Gastrocnemius medialis (tissue), 4 donors: ENCODE measurements at regions of chr12 and their contacts with region 1.

Region 1: DNA sequence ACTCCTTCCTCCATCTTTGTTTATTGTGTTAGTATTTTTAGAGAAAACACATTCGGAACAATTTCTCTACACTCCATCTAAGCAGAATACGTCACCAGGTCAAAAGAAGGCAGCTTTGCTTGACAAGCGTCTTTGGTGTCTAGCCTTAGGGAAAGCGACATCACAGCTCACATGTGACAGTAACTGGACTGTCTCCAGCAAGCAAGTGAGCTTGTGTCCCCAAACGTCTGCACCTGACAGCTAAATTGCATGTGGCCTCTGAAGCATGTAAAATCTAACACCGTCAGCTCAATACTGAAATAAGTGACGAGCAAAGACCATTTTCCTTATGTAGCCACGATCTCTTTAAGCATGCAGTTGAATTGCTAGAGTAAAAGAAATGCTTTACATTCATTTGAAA is 509.8 kb downstream of the GLT1D1 start:
- DNase-seq: no peak
- ATAC-seq: no peak
- H3K4me3 ChIP-seq: no peak overlapping the region
- H3K27ac ChIP-seq: no peak overlapping the region
- H3K4me1 ChIP-seq: no peaks in the 10 kb centered on the region
- H3K27me3 ChIP-seq: no peaks in the 10 kb centered on the region
- CTCF ChIP-seq: no peak
- POLR2A ChIP-seq: no peak

Region 2: DNA sequence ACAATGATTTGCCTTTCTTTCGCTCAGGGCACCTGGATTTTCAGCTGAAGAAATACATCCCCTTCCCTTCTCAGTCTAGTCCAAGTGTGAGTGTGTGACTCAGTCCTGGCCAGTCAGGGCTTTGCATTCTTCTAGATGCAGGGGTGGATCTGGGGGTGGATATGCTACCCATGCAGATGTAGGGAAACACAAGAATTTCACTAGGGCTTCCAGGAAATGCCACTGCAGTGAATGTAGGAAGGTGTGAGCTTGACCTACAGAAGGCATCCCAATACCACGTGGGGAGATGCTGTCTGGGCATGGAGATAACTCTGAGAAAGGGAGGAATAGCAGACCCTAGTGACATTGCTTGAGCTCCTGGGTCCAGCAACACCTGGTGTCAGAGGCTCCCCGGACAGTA is 105.5 kb before region 1 on chr12:
- in situ Hi-C with region 1: loop called in 1 of 4 experiments (anchors 25 kb)
- intact Hi-C with region 1: no loop called
- DNase-seq: no peak
- ATAC-seq: no peak
- H3K4me3 ChIP-seq: no peak overlapping the region
- H3K27ac ChIP-seq: no peak overlapping the region
- H3K4me1 ChIP-seq: no peaks in the 10 kb centered on the region
- H3K27me3 ChIP-seq: no peaks in the 10 kb centered on the region
- CTCF ChIP-seq: no peak
- POLR2A ChIP-seq: no peak

Region 3: DNA sequence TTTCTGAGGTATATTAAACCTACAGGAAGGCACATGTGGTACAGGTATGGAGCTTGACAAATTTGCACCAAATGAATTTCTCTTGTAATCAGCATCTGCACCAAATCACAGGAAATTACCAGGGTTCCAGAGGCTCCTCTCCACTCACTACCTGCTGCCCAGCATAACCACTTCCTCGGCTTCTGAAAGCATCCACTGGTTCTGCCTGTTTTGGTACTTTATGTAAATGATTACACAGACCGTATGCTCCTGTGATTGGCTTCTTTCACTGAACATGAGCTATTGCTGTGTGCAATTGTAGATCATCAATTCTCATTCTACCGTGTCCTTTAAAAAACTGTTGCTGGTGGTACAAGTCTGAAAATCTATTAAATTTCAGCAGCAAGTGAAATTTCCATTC is 18.7 kb after region 1 on chr12:
- in situ Hi-C with region 1: no loop called
- intact Hi-C with region 1: no loop called
- DNase-seq: no peak
- ATAC-seq: no peak
- H3K4me3 ChIP-seq: no peak overlapping the region
- H3K27ac ChIP-seq: no peak overlapping the region
- H3K4me1 ChIP-seq: no peaks in the 10 kb centered on the region
- H3K27me3 ChIP-seq: no peaks in the 10 kb centered on the region
- CTCF ChIP-seq: no peak
- POLR2A ChIP-seq: no peak

Region 4: DNA sequence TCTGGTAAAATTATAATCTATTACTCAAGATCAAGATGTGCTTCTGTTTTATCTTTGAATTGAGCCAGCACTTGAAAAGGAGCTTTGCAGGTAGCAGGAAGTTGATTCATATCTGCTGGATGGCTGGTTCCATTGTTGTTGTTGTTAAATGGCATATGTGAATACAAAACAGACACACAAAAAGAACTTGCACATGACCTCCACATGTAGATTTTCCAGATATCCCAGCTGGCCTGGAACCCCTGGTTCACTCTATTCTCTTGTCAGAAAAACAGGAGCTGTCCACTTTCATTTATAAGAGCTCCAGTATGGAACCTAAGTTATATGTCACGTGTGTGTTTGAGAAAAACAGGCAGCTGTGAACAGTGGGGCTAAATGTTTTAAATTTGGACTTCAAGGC is 266.9 kb after region 1 on chr12:
- in situ Hi-C with region 1: no loop called
- intact Hi-C with region 1: no loop called
- DNase-seq: no peak
- ATAC-seq: no peak
- H3K4me3 ChIP-seq: no peak overlapping the region
- H3K27ac ChIP-seq: no peak overlapping the region
- H3K4me1 ChIP-seq: no peaks in the 10 kb centered on the region
- H3K27me3 ChIP-seq: no peaks in the 10 kb centered on the region
- CTCF ChIP-seq: no peak
- POLR2A ChIP-seq: no peak

Region 5: GRCh38 chr12:130428116-130428515 is 1065.1 kb after region 1 on chr12:
- in situ Hi-C with region 1: no loop called
- intact Hi-C with region 1: no loop called
- DNase-seq: no peak
- ATAC-seq: no peak
- H3K4me3 ChIP-seq: no peak overlapping the region
- H3K27ac ChIP-seq: no peak overlapping the region
- H3K4me1 ChIP-seq: no peaks in the 10 kb centered on the region
- H3K27me3 ChIP-seq: no peaks in the 10 kb centered on the region
- CTCF ChIP-seq: no peak
- POLR2A ChIP-seq: no peak